ENCODE measurements at regions of chr11 and their contacts with region 1.

Region 1: DNA sequence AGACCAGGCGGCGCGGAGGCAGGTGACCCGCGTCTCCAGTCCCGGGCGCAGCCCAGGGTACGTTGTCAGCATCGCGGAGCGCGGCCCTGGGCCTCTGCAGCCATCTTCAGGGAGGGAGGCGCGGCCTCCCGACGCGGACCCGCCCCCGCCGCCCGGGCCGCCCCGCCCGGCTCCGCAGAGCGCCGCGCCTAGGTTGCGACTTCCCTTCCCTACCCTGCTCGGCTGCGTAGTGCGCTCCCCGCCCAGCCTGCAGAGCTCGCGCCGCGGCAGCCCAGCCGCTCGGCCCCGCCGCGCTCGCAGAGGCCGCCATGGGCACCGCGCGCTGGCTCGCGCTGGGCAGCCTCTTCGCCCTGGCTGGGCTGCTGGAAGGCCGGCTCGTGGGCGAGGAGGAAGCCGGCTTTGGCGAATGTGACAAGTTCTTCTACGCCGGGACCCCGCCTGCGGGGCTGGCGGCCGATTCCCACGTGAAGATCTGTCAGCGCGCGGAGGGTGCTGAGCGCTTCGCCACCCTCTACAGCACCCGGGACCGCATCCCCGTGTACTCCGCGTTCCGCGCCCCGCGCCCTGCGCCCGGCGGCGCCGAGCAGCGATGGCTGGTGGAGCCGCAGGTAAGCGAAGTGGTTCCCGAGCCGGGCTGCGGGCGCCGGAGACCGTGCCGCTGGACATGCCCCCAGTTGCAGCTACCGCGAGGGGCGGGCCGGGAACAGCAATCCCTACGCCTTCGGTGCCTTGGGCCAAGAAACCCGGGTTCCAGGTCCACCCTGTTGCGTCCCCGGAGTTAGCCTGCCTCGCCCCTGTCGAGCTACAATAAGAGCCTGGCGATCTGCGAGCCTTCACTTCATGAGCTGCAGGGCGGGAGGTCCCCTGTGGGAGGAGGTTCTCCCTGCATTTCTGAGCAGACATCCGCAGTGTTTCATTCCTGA is at the start of gene ENDOD1:
- DNase-seq: peak; percentile 85
- H3K4me3 Mint-ChIP-seq: peak within 1 kb of the TSS; percentile 89
- H3K27ac Mint-ChIP-seq: peak within 1 kb of the TSS; percentile 96
- H3K4me1 Mint-ChIP-seq: peaks cover 83% of the 10 kb centered on the region
- H3K27me3 Mint-ChIP-seq: no peaks in the 10 kb centered on the region
- total RNA-seq, gene ENDOD1: 33.8 and 34.3 TPM in 2 replicates

Region 2: GRCh38 chr11:93784152-93784934 is 1305.5 kb before region 1 on chr11 and contains the start of gene MED17:
- intact Hi-C with region 1: loop called (anchors 5 kb)
- DNase-seq: peak; percentile 87
- H3K4me3 Mint-ChIP-seq: peak within 1 kb of the TSS; percentile 93
- H3K27ac Mint-ChIP-seq: peak within 1 kb of the TSS; percentile 88
- H3K4me1 Mint-ChIP-seq: peaks cover 45% of the 10 kb centered on the region
- H3K27me3 Mint-ChIP-seq: no peaks in the 10 kb centered on the region
- total RNA-seq, gene MED17: 55.8 and 59.4 TPM in 2 replicates

Region 3: DNA sequence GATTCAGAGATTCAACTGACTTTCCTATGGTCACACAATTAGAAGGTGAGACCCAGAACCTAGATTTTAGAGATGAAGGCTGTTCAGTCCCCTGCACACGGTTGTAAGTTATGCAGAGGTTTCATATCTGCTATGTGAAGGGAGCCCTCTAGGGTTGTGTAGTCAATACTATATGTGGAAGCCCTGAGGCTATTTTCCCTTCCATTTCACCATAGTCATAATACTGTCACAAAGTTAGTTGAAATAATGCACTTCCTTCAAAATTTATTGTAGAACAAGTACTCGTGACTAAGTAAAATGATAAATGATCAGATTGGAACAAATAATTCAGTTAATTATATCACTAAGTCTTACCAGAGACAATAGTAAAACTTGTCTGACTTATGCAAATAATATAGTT is 48.6 kb after region 1 on chr11:
- intact Hi-C with region 1: loop called (anchors 2 kb)
- DNase-seq: no peak
- H3K4me3 Mint-ChIP-seq: no peak overlapping the region
- H3K27ac Mint-ChIP-seq: no peak overlapping the region
- H3K4me1 Mint-ChIP-seq: peaks cover 15% of the 10 kb centered on the region
- H3K27me3 Mint-ChIP-seq: peaks cover 8% of the 10 kb centered on the region

Region 4: GRCh38 chr11:95556342-95557163 is 466.7 kb after region 1 on chr11:
- intact Hi-C with region 1: no loop called
- DNase-seq: peak; percentile 6
- H3K4me3 Mint-ChIP-seq: peak overlapping the region; percentile 38
- H3K27ac Mint-ChIP-seq: peak overlapping the region; percentile 86
- H3K4me1 Mint-ChIP-seq: peaks cover 55% of the 10 kb centered on the region
- H3K27me3 Mint-ChIP-seq: no peaks in the 10 kb centered on the region

Region 5: DNA sequence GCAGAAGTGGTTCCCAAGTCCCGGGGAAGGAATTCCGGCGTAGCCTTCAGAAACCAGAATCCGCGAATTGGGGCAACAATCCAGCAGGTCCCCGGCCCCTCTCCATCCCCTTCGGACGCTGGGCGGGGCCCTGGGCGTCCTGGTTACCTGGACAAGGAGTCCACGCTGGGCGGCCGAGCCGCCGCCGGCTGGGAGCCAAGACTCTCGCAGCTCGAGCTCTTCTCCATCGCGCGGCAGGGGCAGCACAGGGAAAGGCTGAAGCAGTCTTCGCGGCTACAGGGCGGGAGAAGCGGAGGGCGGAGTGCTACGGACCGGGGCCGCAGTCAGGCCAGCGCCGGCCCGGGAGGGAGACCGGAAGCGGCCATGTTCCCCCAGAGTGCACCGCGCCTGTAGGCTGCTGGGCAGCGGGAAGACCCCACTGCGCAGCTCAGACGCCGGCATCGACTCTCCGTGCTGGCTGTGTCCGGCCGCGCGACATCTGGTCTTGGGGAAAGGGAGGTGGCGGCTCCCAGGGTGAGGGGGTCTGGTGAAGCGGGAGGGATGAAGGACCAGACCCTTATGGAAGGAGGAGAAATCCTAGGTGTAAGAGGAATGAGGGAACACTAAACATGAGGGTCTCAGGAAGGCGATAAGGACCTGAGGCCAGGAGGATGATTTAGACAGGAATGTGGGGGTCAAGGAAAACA is 834.0 kb after region 1 on chr11 and contains the start of gene MTMR2:
- intact Hi-C with region 1: loop called (anchors 10 kb)
- DNase-seq: peak; percentile 39
- H3K4me3 Mint-ChIP-seq: peak within 1 kb of the TSS; percentile 100
- H3K27ac Mint-ChIP-seq: peak within 1 kb of the TSS; percentile 86
- H3K4me1 Mint-ChIP-seq: peaks cover 31% of the 10 kb centered on the region
- H3K27me3 Mint-ChIP-seq: peaks cover 3% of the 10 kb centered on the region
- total RNA-seq, gene MTMR2: 41.3 and 41.7 TPM in 2 replicates